Panc1 (cell line): ENCODE measurements at regions of chr5 and their contacts with region 1.

Region 1: DNA sequence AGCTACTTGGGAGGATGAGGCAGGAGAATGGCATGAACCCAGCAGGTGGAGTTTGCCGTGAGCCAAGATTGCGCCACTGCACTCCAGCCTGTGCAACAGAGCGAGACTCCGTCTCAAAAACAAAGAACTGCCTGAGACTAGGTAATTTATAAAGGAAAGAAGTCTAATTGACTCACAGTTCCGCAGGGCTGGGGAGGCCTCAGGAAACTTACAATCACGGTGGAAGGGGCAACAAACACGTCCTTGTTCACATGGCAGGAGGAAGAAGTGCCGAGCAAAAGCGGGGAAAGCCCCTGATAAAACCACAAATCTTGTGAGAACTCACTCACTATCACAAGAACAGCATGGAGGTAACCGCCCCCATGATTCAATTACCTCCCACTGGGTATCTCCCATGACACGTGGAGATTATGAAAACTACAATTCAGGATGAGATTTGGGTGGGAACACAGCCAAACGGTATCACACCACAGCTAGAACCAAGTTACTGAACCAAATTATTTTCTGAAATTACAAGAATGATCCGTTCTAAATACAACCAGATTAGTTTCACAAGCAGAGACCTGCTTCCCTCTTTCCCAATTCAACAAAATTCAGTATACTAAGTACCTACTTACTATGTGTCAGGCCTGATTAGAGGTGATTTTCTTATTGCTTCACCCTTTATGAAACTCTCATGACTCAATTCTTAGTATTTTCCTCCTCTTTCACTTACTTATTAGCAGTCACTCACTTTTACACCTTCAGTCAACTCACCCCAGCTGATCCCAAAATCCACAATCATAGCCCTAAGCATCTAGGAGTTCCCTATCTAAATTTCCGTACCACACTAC is 8.4 kb downstream of the UBTD2 start:
- DNase-seq: no peak
- ATAC-seq: 0 out of 2 replicates have a peak, but pooled peaks have one; percentile 6
- H3K4me3 ChIP-seq: no peak overlapping the region
- H3K27ac ChIP-seq: no peak overlapping the region; the same call in 1 of the 2 replicates
- H3K4me1 ChIP-seq: peaks cover 25% of the 10 kb centered on the region
- H3K27me3 ChIP-seq: no peaks in the 10 kb centered on the region
- CTCF ChIP-seq: no peak

Region 2: GRCh38 chr5:172264815-172265395 is 10.2 kb before region 1 on chr5:
- CTCF ChIA-PET with region 1: no interaction called
- POLR2A ChIA-PET with region 1: interaction called, 10 read pairs
- in situ Hi-C with region 1: no loop called
- intact Hi-C with region 1: no loop called
- DNase-seq: no peak
- ATAC-seq: 0 out of 2 replicates have a peak, but pooled peaks have one; percentile 61
- H3K4me3 ChIP-seq: no peak overlapping the region
- H3K27ac ChIP-seq: no peak overlapping the region
- H3K4me1 ChIP-seq: peaks cover 13% of the 10 kb centered on the region
- H3K27me3 ChIP-seq: no peaks in the 10 kb centered on the region
- CTCF ChIP-seq: no peak

Region 3: DNA sequence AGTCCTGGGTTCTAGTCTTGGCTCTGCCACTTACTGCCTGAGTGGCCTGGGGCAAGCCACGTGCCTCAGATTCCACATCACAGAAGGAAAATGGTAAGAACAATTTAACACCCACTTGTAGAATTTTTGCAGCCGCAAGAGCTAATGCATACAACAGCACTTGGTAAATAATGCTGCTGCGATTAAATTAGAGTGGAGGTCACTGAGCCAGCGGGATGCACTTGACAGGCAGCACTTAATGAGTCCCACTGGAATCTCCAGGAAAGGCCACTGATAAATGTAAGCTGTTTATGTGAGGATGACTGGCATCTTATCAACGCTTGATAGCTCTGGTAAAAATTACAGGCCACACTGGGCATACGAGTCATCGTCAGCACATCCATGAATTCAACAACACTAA is 67.8 kb after region 1 on chr5:
- CTCF ChIA-PET with region 1: no interaction called
- POLR2A ChIA-PET with region 1: interaction called, 12 read pairs
- in situ Hi-C with region 1: no loop called
- intact Hi-C with region 1: no loop called
- DNase-seq: no peak
- ATAC-seq: no peak
- H3K4me3 ChIP-seq: no peak overlapping the region
- H3K27ac ChIP-seq: no peak overlapping the region
- H3K4me1 ChIP-seq: no peaks in the 10 kb centered on the region
- H3K27me3 ChIP-seq: no peaks in the 10 kb centered on the region
- CTCF ChIP-seq: no peak

Region 4: DNA sequence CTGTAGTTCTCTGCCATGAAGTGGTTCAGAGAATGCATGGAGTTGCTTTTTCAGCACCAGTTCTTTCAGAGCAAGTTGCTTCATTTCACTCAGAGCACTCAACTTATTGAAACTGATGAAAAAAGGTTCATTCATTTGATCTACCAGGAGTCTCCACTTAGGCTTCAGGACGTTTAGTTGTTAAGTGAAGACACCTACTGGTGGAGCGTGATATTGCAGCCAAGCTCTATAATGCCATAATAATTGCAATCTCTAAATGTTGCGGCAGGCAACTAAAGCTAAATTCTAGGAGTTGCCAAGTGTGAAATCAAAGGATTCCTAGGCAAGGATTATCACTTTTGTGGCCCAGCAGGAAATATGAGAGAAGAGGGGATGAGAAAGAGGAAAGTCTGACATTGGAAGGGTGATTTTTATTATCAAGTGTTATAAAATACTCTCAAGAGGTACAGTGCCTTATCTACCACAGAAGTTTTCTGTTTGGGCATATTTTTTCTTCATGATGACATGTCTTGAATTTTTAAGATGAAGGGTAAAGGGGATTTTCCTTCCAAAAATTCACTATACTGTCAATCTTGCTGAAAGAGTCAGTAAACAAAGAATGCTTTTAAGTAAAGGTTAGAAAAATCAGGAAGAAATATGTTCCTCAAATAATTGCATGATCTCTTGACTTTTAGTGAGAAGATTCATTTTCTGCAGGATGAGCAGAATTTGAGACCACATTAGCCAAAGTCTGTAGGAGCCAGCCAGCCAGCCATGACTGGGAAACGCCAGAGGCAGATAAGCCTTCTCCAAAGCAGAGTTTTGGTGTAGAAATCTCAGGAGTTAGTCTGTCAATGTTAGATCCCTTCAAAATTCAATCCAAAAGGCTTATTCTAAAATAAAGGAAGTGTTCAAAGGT is 95.8 kb after region 1 on chr5:
- CTCF ChIA-PET with region 1: interaction called, 15 read pairs
- POLR2A ChIA-PET with region 1: no interaction called
- in situ Hi-C with region 1: no loop called
- intact Hi-C with region 1: no loop called
- DNase-seq: no peak
- ATAC-seq: peak; percentile 76
- H3K4me3 ChIP-seq: no peak overlapping the region
- H3K27ac ChIP-seq: peak overlapping the region; percentile 66; the same call in 1 of the 2 replicates
- H3K4me1 ChIP-seq: peaks cover 3% of the 10 kb centered on the region; the same call in 1 of the 2 replicates
- H3K27me3 ChIP-seq: no peaks in the 10 kb centered on the region
- CTCF ChIP-seq: peak; percentile 83

Region 5: GRCh38 chr5:172383191-172383802 is 108.2 kb after region 1 on chr5:
- CTCF ChIA-PET with region 1: interaction called, 23 read pairs
- POLR2A ChIA-PET with region 1: no interaction called
- in situ Hi-C with region 1: no loop called
- intact Hi-C with region 1: no loop called
- DNase-seq: peak; percentile 73
- ATAC-seq: peak; percentile 93
- H3K4me3 ChIP-seq: no peak overlapping the region
- H3K27ac ChIP-seq: peak overlapping the region; percentile 78
- H3K4me1 ChIP-seq: peaks cover 61% of the 10 kb centered on the region
- H3K27me3 ChIP-seq: no peaks in the 10 kb centered on the region
- CTCF ChIP-seq: no peak

Region 6: GRCh38 chr5:173355561-173355960 is 1080.4 kb after region 1 on chr5:
- CTCF ChIA-PET with region 1: no interaction called
- POLR2A ChIA-PET with region 1: no interaction called
- in situ Hi-C with region 1: no loop called
- intact Hi-C with region 1: no loop called
- DNase-seq: no peak
- ATAC-seq: no peak
- H3K4me3 ChIP-seq: no peak overlapping the region
- H3K27ac ChIP-seq: no peak overlapping the region
- H3K4me1 ChIP-seq: no peaks in the 10 kb centered on the region
- H3K27me3 ChIP-seq: 0 out of 2 replicates have a peak, but pooled peaks cover 2% of the 10 kb centered on the region
- CTCF ChIP-seq: no peak